ENCODE measurements at regions of chr13 and their contacts with region 1.

Region 1: GRCh38 chr13:44141725-44142539 is 231.7 kb upstream of the SERP2 start:
- DNase-seq: peak; percentile 98 to 100
- H3K4me3 ChIP-seq: peak overlapping the region; percentile 62
- H3K4me3 Mint-ChIP-seq: peak overlapping the region; percentile 83
- H3K27ac Mint-ChIP-seq: peak overlapping the region; percentile 94
- H3K4me1 ChIP-seq: peaks cover 28% of the 10 kb centered on the region
- H3K4me1 Mint-ChIP-seq: peaks cover 39% of the 10 kb centered on the region
- H3K27me3 ChIP-seq: no peaks in the 10 kb centered on the region
- H3K27me3 Mint-ChIP-seq: no peaks in the 10 kb centered on the region
- CTCF ChIP-seq: no peak

Region 2: GRCh38 chr13:43905435-43906031 is 236.4 kb before region 1 on chr13:
- CTCF ChIA-PET with region 1: no interaction called
- POLR2A ChIA-PET with region 1: no interaction called
- intact Hi-C with region 1: loop called (anchors 10 kb)
- DNase-seq: peak in 1 of 2 experiments; percentile 63
- H3K4me3 ChIP-seq: no peak overlapping the region
- H3K4me3 Mint-ChIP-seq: no peak overlapping the region
- H3K27ac Mint-ChIP-seq: no peak overlapping the region
- H3K4me1 ChIP-seq: no peaks in the 10 kb centered on the region
- H3K4me1 Mint-ChIP-seq: peaks cover 7% of the 10 kb centered on the region
- H3K27me3 ChIP-seq: no peaks in the 10 kb centered on the region
- H3K27me3 Mint-ChIP-seq: peaks cover 2% of the 10 kb centered on the region
- CTCF ChIP-seq: peak; percentile 63 to 86

Region 3: GRCh38 chr13:44063876-44064275 is 78.1 kb before region 1 on chr13:
- CTCF ChIA-PET with region 1: no interaction called
- POLR2A ChIA-PET with region 1: no interaction called
- intact Hi-C with region 1: no loop called
- DNase-seq: no peak
- H3K4me3 ChIP-seq: no peak overlapping the region
- H3K4me3 Mint-ChIP-seq: no peak overlapping the region
- H3K27ac Mint-ChIP-seq: no peak overlapping the region
- H3K4me1 ChIP-seq: no peaks in the 10 kb centered on the region; the same call in 1 of the 2 replicates
- H3K4me1 Mint-ChIP-seq: peaks cover 12% of the 10 kb centered on the region
- H3K27me3 ChIP-seq: no peaks in the 10 kb centered on the region
- H3K27me3 Mint-ChIP-seq: no peaks in the 10 kb centered on the region
- CTCF ChIP-seq: no peak

Region 4: GRCh38 chr13:44108331-44108858 is 33.5 kb before region 1 on chr13:
- CTCF ChIA-PET with region 1: no interaction called
- POLR2A ChIA-PET with region 1: no interaction called
- intact Hi-C with region 1: loop called (anchors 1 kb)
- DNase-seq: peak; percentile 89 to 91
- H3K4me3 ChIP-seq: no peak overlapping the region
- H3K4me3 Mint-ChIP-seq: peak overlapping the region; percentile 8
- H3K27ac Mint-ChIP-seq: peak overlapping the region; percentile 72
- H3K4me1 ChIP-seq: peaks cover 23% of the 10 kb centered on the region
- H3K4me1 Mint-ChIP-seq: peaks cover 30% of the 10 kb centered on the region
- H3K27me3 ChIP-seq: no peaks in the 10 kb centered on the region
- H3K27me3 Mint-ChIP-seq: no peaks in the 10 kb centered on the region
- CTCF ChIP-seq: no peak

Region 5: DNA sequence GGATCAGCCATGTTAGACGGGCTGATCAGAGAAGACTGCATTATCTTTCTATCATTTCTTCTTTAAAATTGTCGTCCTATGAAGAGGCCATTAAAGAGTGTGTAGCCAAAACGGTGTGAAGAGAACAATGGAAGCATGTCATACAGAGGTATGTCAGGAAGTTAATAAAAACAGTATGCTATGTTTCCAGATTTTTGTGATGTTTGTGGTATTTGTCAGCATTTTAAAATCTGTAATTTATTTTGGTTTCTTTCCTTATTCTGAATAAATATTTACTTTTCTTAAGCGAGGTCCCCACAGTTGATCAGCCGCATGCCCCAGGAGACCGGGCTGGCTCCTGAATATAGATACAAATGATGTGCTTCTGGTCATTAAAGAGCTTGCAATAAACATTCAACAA is 88.8 kb after region 1 on chr13:
- CTCF ChIA-PET with region 1: interaction called, 5 read pairs
- POLR2A ChIA-PET with region 1: interaction called, 3 read pairs
- intact Hi-C with region 1: loop called (anchors 1 kb)
- DNase-seq: no peak
- H3K4me3 ChIP-seq: no peak overlapping the region
- H3K4me3 Mint-ChIP-seq: no peak overlapping the region
- H3K27ac Mint-ChIP-seq: no peak overlapping the region
- H3K4me1 ChIP-seq: peaks cover 45% of the 10 kb centered on the region
- H3K4me1 Mint-ChIP-seq: peaks cover 7% of the 10 kb centered on the region
- H3K27me3 ChIP-seq: no peaks in the 10 kb centered on the region
- H3K27me3 Mint-ChIP-seq: no peaks in the 10 kb centered on the region
- CTCF ChIP-seq: no peak

Region 6: DNA sequence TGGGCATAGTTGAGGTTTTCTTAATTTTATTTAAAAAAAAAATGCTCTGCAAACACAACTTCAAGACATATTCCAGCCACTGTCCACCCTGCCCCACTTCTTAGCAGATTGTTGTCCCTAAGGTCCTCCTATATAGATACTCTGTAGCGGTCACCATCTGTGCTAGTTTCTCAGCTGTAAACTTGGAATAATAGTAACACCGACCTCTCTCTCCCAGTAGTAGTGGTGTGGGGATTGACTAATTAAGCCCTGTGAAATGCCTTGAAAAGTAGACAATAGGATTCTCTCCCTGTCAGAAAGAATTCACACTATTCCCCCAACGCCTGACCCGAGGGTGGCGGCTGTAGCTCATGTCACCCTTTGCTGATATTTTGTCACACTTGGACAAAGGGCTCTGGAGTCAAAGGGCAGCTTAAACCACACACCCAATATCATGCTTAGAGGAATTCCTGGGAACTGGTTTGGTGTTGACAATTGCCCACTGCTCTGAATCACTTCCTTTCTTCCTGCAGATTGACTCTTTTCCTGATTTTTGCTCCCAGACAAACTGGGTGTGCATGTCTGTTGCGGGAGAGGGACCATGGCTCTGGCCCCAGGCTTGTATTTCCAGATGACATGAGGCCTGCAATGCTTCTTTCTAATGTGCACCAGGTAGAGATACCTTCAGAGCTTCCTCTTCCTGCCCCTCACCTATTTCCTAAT is 222.6 kb after region 1 on chr13:
- CTCF ChIA-PET with region 1: no interaction called
- POLR2A ChIA-PET with region 1: interaction called, 6 read pairs
- intact Hi-C with region 1: loop called (anchors 2 kb)
- DNase-seq: peak; percentile 80 to 89
- H3K4me3 ChIP-seq: no peak overlapping the region
- H3K4me3 Mint-ChIP-seq: peak overlapping the region; percentile 5
- H3K27ac Mint-ChIP-seq: peak overlapping the region; percentile 81
- H3K4me1 ChIP-seq: peaks cover 83% of the 10 kb centered on the region
- H3K4me1 Mint-ChIP-seq: peaks cover 47% of the 10 kb centered on the region
- H3K27me3 ChIP-seq: no peaks in the 10 kb centered on the region
- H3K27me3 Mint-ChIP-seq: no peaks in the 10 kb centered on the region
- CTCF ChIP-seq: no peak